Sigmoid colon (tissue), 7 donors: ENCODE measurements at regions of chr15 and their contacts with region 1.

Region 1: DNA sequence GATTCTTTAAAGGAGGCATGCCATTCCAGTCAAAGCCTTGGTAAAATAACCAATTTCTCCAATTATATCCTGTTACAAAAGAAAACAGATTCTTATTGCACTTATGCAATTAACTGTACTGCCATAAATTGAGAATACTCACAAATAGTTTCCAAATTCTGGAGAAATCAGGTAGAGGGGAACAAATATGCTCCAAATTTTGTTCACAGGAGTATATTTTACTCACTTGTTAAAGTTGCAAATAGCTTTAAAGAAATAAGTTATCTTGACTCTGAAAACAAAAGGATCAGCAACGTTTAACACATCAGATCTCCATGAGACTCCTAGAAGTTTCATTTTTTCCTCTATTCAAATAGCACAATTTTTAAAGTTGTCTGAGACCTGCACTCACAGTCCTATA is 712.1 kb upstream of the ARRDC4 start:
- DNase-seq: no peak
- H3K4me3 ChIP-seq: no peak overlapping the region
- H3K27ac ChIP-seq: no peak overlapping the region
- H3K4me1 ChIP-seq: no peaks in the 10 kb centered on the region
- H3K27me3 ChIP-seq: no peaks in the 10 kb centered on the region
- CTCF ChIP-seq: no peak
- EP300 ChIP-seq: no peak
- POLR2A ChIP-seq: no peak

Region 2: DNA sequence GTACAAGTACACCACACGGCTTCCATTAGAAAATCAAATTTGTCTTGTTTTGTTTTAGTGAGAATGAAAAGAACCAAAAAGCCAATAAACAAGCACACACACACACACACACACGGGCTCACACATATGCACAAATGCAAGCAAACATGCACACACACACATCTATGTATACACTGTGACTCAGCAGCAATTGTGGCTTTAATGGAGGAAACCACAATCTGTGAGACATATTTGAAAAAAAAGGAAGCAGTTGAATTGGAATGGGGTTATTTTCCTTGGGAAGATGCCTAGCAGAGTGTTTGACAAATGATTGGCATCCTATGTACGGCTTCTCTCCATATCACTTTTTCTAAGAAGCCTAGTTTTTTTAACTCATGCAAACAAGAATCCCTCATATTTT is 511.0 kb after region 1 on chr15:
- intact Hi-C with region 1: loop called (anchors 10 kb)
- DNase-seq: no peak
- H3K4me3 ChIP-seq: no peak overlapping the region
- H3K27ac ChIP-seq: no peak overlapping the region
- H3K4me1 ChIP-seq: peaks cover 0 to 15% (median 6%) of the 10 kb centered on the region in 4 donors
- H3K27me3 ChIP-seq: no peaks in the 10 kb centered on the region
- CTCF ChIP-seq: no peak
- EP300 ChIP-seq: no peak
- POLR2A ChIP-seq: no peak